H1 (cell line): ENCODE measurements at regions of chr20 and their contacts with region 1.

Region 1: GRCh38 chr20:37564388-37565133 is 36.9 kb upstream of the BLCAP start:
- DNase-seq: peak in 1 of 2 experiments; percentile 93
- H3K4me3 ChIP-seq: no peak overlapping the region
- H3K27ac ChIP-seq: no peak overlapping the region
- H3K4me1 ChIP-seq: peaks cover 2 to 14% (median 7%) of the 10 kb centered on the region in 4 experiments; a peak in 5 of 7 replicates
- H3K27me3 ChIP-seq: peaks cover 0 to 13% (median 5%) of the 10 kb centered on the region in 4 experiments; a peak in 5 of 7 replicates
- CTCF ChIP-seq: peak; percentile 70 to 97 (median 87)
- EP300 ChIP-seq: no peak; a peak in 1 of 3 replicates
- POLR2A ChIP-seq: no peak
- RAD21 ChIP-seq: peak; percentile 98 to 99

Region 2: DNA sequence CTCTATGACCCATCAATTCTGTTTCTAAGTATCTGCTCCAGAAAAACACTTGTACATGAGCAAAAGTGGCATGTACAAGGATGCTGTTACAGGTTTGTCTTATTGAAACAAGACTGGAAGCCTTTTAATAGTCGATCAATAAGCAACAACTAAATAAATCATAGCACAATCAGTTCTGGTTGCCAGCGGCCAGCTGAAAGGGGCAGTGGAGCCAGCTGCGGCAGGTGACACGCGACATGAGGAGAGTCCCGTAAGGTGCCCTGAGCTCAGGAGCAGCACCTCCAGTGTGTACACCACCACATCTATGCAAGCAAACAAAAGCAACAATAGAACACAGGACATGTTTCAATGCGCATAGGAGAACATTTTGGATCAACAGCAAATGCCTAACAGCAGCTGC is 64.2 kb before region 1 on chr20:
- CTCF ChIA-PET with region 1: no interaction called
- POLR2A ChIA-PET with region 1: no interaction called
- DNase-seq: no peak
- H3K4me3 ChIP-seq: no peak overlapping the region
- H3K27ac ChIP-seq: no peak overlapping the region
- H3K4me1 ChIP-seq: peaks cover 4 to 6% (median 4%) of the 10 kb centered on the region in 4 experiments; a peak in 5 of 7 replicates
- H3K27me3 ChIP-seq: no peaks in the 10 kb centered on the region
- CTCF ChIP-seq: no peak
- EP300 ChIP-seq: no peak
- POLR2A ChIP-seq: no peak
- RAD21 ChIP-seq: no peak

Region 3: GRCh38 chr20:37575884-37576283 is 11.3 kb after region 1 on chr20:
- CTCF ChIA-PET with region 1: interaction called, 55 read pairs
- POLR2A ChIA-PET with region 1: no interaction called
- DNase-seq: no peak
- H3K4me3 ChIP-seq: no peak overlapping the region
- H3K27ac ChIP-seq: no peak overlapping the region
- H3K4me1 ChIP-seq: peaks cover 0 to 2% (median under 1%) of the 10 kb centered on the region in 4 experiments; a peak in 4 of 7 replicates
- H3K27me3 ChIP-seq: no peaks in the 10 kb centered on the region
- CTCF ChIP-seq: peak; percentile 22 to 43 (median 32); a peak in 3 of 4 replicates
- EP300 ChIP-seq: no peak
- POLR2A ChIP-seq: no peak
- RAD21 ChIP-seq: peak in 1 of 2 experiments; percentile 51; a peak in 2 of 4 replicates

Region 4: DNA sequence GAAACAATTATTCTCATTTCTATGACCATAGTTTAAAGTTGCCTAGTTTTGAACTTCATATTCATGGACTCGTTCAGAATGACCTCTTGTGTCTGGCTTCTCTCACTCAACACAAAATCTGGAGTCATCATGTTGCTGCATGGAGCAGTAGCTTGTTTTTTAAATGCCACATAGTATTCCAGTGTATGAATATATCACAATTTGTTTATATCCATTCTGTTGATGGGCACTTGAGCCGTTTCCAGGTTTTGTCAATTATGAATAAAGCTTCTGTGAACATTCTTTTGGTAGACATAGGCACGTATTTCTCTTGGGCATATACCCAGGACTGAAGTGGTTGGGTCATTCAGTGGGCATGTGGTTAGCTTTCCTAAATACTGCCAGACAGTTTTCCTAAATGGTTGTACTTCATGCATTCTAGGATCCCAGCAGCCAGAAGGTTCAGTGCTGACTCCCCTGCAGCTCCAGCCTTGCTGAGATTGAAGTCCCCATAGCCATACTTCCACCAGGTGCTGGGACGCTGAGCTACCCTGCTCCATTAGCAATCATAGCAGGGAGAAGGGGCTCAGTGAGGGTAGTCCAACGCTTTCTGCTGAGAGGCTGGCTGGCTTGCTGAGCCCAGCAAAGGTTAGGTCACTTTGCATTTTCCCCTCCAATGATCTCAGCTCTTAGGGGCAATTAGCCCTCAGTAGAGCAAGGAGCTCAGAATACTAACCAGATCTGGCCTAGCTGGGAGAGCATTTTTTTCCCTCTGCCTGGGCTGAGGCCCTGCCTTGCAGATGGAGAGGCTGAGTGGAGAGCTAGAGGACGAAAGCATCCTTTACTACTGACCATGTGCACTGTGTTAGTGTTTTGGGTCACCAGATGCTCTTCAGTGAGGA is 93.6 kb after region 1 on chr20:
- CTCF ChIA-PET with region 1: interaction called, 17 read pairs
- POLR2A ChIA-PET with region 1: no interaction called
- DNase-seq: no peak
- H3K4me3 ChIP-seq: no peak overlapping the region
- H3K27ac ChIP-seq: no peak overlapping the region
- H3K4me1 ChIP-seq: no peaks in the 10 kb centered on the region
- H3K27me3 ChIP-seq: no peaks in the 10 kb centered on the region; a peak in 1 of 7 replicates
- CTCF ChIP-seq: no peak
- EP300 ChIP-seq: no peak
- POLR2A ChIP-seq: no peak
- RAD21 ChIP-seq: no peak

Region 5: DNA sequence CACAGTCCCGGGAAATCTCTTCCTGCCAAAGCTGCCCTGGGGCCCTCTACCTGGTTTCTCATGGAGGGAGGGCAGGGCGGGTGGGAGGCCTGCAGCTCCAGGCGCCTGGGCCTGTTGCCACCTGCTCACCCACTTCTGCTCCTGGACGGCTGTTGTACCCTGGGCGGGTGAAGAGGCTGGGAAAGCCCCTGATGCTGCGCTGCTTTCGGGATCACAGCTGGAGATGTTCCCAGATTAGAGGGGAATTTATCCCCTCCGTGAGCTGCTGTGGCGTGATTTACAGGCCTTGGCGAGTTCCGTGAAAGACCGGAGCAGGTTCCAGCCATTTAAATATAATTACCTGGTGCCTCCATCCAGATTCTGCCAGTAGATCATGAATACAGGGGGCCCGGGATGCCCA is 326.1 kb after region 1 on chr20:
- CTCF ChIA-PET with region 1: interaction called, 13 read pairs
- POLR2A ChIA-PET with region 1: no interaction called
- DNase-seq: no peak
- H3K4me3 ChIP-seq: no peak overlapping the region
- H3K27ac ChIP-seq: no peak overlapping the region
- H3K4me1 ChIP-seq: no peaks in the 10 kb centered on the region
- H3K27me3 ChIP-seq: no peaks in the 10 kb centered on the region
- CTCF ChIP-seq: no peak
- EP300 ChIP-seq: no peak
- POLR2A ChIP-seq: no peak
- RAD21 ChIP-seq: no peak

Region 6: GRCh38 chr20:37990571-37991151 is 426.1 kb after region 1 on chr20:
- CTCF ChIA-PET with region 1: interaction called, 22 read pairs
- POLR2A ChIA-PET with region 1: no interaction called
- DNase-seq: no peak
- H3K4me3 ChIP-seq: no peak overlapping the region
- H3K27ac ChIP-seq: no peak overlapping the region
- H3K4me1 ChIP-seq: no peaks in the 10 kb centered on the region; a peak in 2 of 7 replicates
- H3K27me3 ChIP-seq: no peaks in the 10 kb centered on the region
- CTCF ChIP-seq: no peak
- EP300 ChIP-seq: no peak
- POLR2A ChIP-seq: no peak
- RAD21 ChIP-seq: no peak